Prostate gland (tissue), 2 donors: ENCODE measurements at regions of chr22 and their contacts with region 1.

Region 1: DNA sequence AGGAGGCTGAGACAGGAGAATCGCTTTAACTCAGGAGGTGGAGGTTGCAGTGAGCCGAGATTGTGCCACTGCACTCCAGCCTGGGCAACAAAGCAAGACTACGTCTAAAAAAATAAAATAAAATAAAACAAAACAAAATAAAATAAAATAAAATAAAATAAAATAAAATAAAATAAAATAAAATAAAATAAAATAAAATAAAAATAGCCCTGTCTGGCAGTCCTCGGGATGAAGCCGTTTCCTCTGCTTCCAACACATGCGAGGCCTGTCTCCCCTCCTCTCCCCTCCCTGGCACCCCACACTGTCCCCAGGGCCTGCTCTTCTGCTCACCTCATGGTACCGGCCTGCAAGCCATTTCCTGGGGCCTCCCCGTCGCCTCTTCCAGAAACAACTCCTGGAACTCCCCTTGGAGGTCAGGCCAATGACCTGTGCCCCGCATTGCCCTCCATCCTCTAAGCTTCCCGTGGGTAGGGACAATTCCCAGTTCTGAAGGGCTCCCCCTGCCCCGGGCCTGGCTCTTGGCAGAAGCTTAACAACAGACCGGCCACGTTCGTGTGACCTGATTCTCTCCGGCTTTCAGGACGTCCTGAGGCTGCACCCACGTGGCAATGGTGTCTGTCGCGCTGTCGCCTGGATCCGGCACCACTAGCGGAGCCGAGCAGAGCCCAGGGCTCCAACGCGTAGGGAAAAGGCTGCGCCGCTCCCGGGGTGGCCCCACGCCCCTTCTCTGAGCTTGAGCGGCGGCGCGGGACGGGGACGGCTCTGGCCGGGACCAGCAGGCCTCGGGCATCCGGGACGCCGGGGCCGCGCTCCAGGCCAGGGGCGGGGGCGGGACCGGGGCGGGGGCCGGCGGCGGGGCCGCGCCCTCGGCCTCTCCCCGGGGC is 456 bp upstream of the PARVB start:
- DNase-seq: no peak
- H3K4me3 ChIP-seq: peak overlapping the region; percentile 46 to 48
- H3K27ac ChIP-seq: peak overlapping the region; percentile 48 to 57
- H3K4me1 ChIP-seq: no peaks in the 10 kb centered on the region
- H3K27me3 ChIP-seq: no peaks in the 10 kb centered on the region
- CTCF ChIP-seq: no peak
- POLR2A ChIP-seq: no peak

Region 2: DNA sequence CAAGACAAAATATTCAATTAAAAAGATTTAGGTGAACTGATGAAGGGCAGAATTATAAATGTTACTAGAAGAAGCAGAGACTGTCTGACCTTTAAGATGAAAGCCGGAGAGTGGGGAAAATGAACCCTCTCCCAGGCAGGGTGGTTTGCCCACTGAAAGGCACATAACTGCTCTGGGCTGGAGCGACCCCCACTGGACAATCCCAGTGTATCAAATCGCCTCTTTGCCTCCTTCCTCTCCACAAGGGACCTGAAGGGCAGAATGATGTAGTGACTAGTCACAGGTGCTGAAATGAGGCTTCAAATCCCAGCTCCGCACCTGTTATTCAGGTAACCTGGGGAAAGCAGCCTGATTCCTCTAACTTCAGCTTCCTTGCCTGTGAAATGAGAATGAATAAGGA is 280.5 kb before region 1 on chr22:
- intact Hi-C with region 1: no loop called
- DNase-seq: no peak
- H3K4me3 ChIP-seq: no peak overlapping the region
- H3K27ac ChIP-seq: no peak overlapping the region
- H3K4me1 ChIP-seq: no peaks in the 10 kb centered on the region
- H3K27me3 ChIP-seq: no peaks in the 10 kb centered on the region
- CTCF ChIP-seq: no peak
- POLR2A ChIP-seq: no peak

Region 3: GRCh38 chr22:44074337-44074984 is 50.8 kb after region 1 on chr22:
- intact Hi-C with region 1: loop called (anchors 5 kb)
- DNase-seq: no peak
- H3K4me3 ChIP-seq: no peak overlapping the region
- H3K27ac ChIP-seq: no peak overlapping the region
- H3K4me1 ChIP-seq: no peaks in the 10 kb centered on the region
- H3K27me3 ChIP-seq: no peaks in the 10 kb centered on the region
- CTCF ChIP-seq: no peak
- POLR2A ChIP-seq: no peak